Right cardiac atrium (tissue), 5 donors: ENCODE measurements at regions of chr11 and their contacts with region 1.

Region 1: GRCh38 chr11:34916015-34916842 is at the starts of genes APIP and PDHX:
- DNase-seq: peak; percentile 99 to 100 (median 99)
- ATAC-seq: peak; percentile 97 to 98
- H3K4me3 ChIP-seq: peak within 1 kb of the TSS; percentile 90
- H3K27ac ChIP-seq: peak within 1 kb of the TSS; percentile 98
- H3K4me1 ChIP-seq: no peaks in the 10 kb centered on the region
- H3K27me3 ChIP-seq: no peaks in the 10 kb centered on the region
- total RNA-seq, gene APIP: 23.1 to 34.3 (median 26.7) TPM
- total RNA-seq, gene PDHX: 68.4 to 89.2 (median 77.3) TPM

Region 2: DNA sequence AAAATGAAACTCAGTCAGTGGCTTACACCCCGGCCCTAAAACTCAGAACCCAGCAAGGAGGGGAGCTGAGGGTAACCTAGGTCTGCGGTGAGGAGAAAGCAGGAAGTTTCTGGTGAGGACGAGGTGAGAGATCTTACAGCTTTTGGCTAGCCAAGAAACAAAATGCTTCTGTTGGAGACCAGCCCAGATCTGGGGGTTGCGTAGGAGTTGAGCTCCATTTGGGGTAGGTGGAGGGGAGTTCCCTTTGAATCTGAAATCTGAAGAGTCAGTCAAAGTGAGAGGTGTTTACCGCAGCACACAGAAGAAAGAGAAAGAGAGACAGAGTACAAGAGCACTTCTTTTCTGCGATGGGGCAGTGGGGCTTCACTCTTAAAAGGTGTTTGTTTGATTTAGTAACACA is 265.7 kb before region 1 on chr11:
- intact Hi-C with region 1: no loop called
- DNase-seq: no peak
- ATAC-seq: no peak
- H3K4me3 ChIP-seq: no peak overlapping the region
- H3K27ac ChIP-seq: no peak overlapping the region
- H3K4me1 ChIP-seq: peaks cover 2% of the 10 kb centered on the region
- H3K27me3 ChIP-seq: no peaks in the 10 kb centered on the region

Region 3: DNA sequence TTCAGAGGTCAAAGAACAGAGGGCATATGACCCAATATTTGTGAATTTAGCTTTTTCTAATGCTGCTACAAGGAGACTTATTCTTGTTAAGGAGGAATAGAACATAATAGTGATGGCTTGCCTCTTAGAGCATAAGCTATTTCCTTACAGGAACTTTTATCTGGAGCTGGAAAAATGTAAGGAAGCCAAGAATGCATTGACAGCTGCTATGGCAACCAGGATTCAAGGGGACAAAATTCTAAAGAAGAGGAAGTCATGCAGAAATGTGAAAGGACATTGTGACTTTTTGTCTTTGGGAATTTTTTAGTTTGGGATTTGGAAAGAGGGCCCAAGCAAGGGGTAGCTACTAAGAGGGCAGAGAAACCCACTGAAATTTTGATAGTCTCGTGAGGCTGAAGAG is 244.3 kb before region 1 on chr11:
- intact Hi-C with region 1: no loop called
- DNase-seq: no peak
- ATAC-seq: no peak
- H3K4me3 ChIP-seq: no peak overlapping the region
- H3K27ac ChIP-seq: no peak overlapping the region
- H3K4me1 ChIP-seq: peaks cover 1% of the 10 kb centered on the region
- H3K27me3 ChIP-seq: no peaks in the 10 kb centered on the region

Region 4: GRCh38 chr11:35313066-35313759 is 397.0 kb after region 1 on chr11:
- intact Hi-C with region 1: loop called in 1 of 4 experiments (anchors 10 kb)
- DNase-seq: no peak
- ATAC-seq: no peak
- H3K4me3 ChIP-seq: no peak overlapping the region
- H3K27ac ChIP-seq: no peak overlapping the region
- H3K4me1 ChIP-seq: no peaks in the 10 kb centered on the region
- H3K27me3 ChIP-seq: no peaks in the 10 kb centered on the region